Esophagus muscularis mucosa (tissue), 4 donors: ENCODE measurements at regions of chr16 and their contacts with region 1.

Region 1: DNA sequence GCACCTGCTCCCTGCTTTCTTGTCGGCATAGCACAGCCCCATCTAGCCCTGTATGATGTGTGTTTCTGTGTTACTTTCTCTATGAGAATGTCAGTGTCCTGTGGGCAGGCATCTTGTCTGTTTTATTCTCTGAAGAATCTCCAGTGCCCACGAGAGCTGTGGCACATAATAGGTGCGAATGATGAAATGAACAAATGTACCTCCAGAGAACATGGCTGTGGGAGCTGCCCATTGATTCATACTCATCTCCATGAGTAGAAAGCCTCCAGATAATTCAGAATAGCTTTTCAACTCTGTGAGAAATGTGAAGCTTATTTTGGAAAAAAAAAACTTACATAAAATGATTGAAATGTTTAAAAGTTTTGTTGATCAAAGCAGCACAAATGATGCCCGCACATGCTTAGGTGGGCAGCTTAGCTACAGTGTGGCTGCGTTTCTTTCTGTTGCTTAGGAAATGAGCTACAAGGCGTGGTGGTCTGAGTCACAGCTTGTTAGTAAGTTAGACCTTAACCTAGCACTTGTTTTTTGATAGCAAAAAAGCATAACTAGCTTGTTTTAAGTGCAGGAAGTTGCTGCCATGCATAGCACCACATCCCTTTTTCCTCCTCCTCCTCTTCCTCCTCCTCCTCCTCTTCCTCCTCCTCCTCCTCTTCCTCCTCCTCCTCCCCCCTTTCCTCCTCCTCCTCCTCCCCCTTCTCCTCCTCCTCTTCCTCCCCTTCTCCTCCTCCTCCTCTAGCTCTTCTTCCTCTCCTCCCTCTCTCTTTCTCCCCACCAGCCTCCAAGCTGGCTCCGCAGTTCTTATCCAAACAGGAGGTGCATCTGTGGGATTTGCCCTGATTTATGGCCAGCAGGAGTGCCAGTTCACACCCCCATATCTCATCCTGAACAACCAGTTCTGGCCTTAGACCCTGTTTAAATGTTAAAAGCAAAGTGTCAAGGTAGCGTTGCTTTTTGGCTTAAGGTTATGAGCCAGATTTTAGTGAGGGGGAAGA is 221.5 kb downstream of the IRF8 start:
- DNase-seq: no peak
- H3K4me3 ChIP-seq: no peak overlapping the region
- H3K27ac ChIP-seq: no peak overlapping the region
- H3K4me1 ChIP-seq: peaks cover 0 to 6% (median 2%) of the 10 kb centered on the region in 4 donors
- H3K27me3 ChIP-seq: peaks cover 0 to 13% (median 0%) of the 10 kb centered on the region in 4 donors
- CTCF ChIP-seq: no peak
- EP300 ChIP-seq: no peak
- POLR2A ChIP-seq: no peak

Region 2: DNA sequence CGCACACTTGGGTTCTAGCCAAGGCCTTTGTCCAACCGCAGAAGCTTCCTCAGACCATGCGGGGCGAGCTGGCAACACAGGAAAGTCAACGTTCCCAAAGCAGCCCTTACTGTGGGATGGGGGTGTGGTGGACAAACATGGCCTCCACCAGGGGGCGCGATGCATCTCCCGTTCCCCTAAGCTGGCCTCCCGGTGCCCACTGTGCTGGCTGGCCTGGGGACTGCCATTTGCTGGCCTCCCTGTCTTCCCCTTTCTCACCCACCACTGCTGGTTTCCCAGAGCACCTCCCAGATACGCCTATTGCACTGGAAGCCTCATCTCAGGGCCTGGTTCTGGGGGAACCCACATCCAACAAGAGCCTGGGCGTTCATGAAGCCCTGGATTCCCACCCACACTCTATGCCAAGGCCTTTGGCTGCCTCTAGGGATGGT is 76.2 kb before region 1 on chr16:
- intact Hi-C with region 1: no loop called
- DNase-seq: no peak
- H3K4me3 ChIP-seq: no peak overlapping the region
- H3K27ac ChIP-seq: no peak overlapping the region
- H3K4me1 ChIP-seq: no peaks in the 10 kb centered on the region
- H3K27me3 ChIP-seq: peaks cover 0 to 7% (median 0%) of the 10 kb centered on the region in 4 donors
- CTCF ChIP-seq: peak; percentile 39 to 56 (median 52)
- EP300 ChIP-seq: no peak
- POLR2A ChIP-seq: no peak

Region 3: DNA sequence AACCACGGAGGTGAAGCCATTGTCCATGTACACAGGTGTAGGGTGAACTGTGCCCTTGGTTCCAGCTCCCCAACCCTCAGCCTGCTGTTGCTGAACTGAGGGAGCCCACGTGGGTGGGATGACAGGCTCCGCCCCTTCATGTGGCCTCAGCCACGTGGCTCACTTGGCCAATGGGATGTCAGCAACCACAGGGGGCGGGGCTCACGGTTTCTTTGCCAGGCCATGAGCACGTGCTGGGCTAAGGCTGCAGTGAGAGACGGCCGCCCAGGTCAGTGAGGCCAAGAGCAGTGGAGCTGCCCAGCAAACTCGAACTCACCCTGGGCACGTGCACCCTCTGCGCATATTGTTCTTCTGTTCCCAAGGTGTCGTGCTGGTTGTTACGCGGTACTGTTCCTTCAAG is 61.0 kb after region 1 on chr16:
- intact Hi-C with region 1: loop called (anchors 5 kb)
- DNase-seq: no peak
- H3K4me3 ChIP-seq: no peak overlapping the region
- H3K27ac ChIP-seq: no peak overlapping the region
- H3K4me1 ChIP-seq: no peaks in the 10 kb centered on the region
- H3K27me3 ChIP-seq: no peaks in the 10 kb centered on the region
- CTCF ChIP-seq: no peak
- EP300 ChIP-seq: no peak
- POLR2A ChIP-seq: no peak